GM10248 (cell line): ENCODE measurements at regions of chr3 and their contacts with region 1.

Region 1: GRCh38 chr3:52231502-52232293 is 6.3 kb upstream of the TLR9 start:
- DNase-seq: peak; percentile 81
- CTCF ChIP-seq: peak; percentile 96

Region 2: DNA sequence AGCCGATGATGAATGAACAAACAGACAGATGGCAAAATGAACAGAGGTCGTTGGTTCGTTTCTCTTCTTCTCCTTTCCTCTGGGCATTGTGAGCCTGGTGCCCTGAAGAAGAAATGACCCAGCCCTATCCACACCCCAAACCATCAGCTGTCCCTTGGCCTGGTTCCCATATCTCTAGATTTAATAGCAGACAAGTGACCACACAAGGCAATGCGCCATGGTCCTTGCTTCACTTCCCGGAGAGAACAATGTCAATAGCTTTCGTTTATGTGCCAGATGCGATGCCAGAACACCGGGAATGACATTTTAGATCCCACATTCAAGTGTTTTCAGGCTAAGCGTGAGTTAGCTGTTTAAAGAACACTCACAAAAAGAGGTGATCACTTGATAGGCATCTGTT is 95.2 kb before region 1 on chr3:
- CTCF ChIA-PET with region 1: no interaction called
- POLR2A ChIA-PET with region 1: no interaction called
- DNase-seq: no peak
- CTCF ChIP-seq: no peak

Region 3: DNA sequence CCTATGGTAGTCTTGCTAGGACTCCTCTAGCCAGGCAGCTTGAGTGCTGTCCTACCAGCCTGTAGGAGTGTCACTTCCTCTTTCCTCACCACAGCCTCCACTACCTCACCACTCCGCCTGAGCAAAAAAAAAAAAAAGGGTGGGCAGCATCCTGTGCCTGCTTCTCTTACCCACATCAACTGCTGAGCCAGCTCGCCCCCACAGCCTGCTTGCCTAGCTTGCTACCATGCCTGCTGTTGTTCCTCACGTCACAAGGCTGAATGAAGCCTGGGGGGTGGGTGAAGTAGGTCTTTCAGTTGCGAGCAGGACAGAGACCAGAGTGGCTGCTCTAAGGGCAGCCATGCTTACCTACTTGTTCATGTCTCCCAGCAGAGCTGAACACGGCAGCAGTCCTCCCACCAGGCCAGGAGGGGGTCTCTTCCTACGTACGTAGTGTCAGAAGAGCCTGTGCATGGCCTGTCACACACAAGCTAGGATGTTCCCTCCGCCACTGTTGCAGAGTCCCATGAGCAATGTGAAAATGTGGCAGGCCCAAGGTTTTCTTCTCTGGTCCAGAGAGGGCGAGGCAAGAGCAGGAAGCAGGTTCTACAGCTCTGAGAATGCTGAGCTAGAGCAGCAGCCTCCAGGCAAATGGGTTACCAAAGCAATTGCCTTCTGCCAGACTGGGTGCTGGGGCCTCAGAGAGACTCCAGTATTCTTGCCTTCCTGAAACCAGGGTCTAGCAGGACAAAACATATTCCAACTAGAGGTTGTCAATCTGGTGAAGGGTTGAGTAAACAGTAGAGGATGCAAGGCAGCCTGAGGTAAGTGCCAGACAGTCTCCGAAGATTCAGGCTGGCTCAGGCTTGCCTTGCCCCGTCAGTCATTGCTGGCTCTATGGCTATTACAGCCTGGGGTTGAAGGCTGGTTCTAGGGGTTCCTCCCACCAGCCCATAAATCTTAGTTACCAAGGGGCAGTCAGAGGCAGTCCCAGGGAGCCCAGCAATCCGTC is 21.9 kb after region 1 on chr3:
- CTCF ChIA-PET with region 1: interaction called, 31 read pairs
- POLR2A ChIA-PET with region 1: interaction called, 3 read pairs
- DNase-seq: peak; percentile 91
- CTCF ChIP-seq: no peak

Region 4: DNA sequence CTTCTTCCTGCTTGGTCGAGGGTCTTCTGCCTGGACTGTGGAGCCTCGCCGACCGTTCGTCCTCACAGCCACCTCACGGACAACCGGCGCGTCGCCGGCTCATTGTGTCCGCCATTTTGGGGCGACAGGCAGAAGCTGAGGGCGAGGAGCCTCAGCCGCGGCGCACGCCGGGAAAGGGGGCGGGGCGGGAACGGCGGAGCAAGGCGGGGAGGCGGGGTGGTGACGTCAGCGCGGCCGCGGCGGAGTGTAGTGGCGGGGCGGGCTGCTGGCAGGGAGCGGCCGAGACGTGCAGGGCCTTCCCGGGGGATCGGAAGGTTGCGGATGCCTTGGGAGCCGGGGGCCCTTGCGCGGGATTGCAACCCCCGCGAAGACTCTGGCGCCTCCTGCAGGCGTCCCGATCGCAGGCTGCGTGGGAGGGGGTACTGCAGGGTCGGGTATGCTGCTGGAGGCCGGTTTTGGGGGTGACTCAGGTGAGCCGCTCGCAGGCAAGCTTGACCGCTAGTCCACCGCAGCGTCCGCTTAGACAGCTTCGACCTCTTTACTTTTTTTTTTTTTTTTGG is 46.9 kb after region 1 on chr3 and contains the start of gene WDR82:
- CTCF ChIA-PET with region 1: interaction called, 44 read pairs
- POLR2A ChIA-PET with region 1: interaction called, 5 read pairs
- DNase-seq: peak; percentile 96
- CTCF ChIP-seq: no peak

Region 5: GRCh38 chr3:52291508-52292181 is 59.9 kb after region 1 on chr3:
- CTCF ChIA-PET with region 1: interaction called, 10 read pairs
- POLR2A ChIA-PET with region 1: no interaction called
- DNase-seq: peak; percentile 76
- CTCF ChIP-seq: peak; percentile 64

Region 6: DNA sequence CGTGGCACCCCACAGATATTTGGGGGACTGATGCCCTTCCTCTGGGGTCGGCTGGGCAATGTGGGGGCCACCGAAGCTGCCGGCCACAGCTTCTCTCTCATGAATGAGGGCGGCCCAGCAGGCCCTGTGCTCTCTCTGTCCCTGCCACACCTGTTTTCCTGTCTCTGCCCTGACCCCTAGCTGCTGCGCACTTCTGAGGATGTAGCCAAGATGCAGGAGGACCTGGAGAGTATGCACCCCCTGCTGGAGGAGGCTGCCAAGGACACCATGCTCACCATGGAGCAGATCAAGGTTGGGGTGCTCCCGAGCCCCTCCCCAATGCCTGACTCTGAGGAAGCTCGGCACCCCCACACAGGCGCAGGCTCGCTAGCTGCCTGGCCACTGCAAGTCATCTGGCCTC is 153.5 kb after region 1 on chr3:
- CTCF ChIA-PET with region 1: interaction called, 8 read pairs
- POLR2A ChIA-PET with region 1: interaction called, 12 read pairs
- DNase-seq: peak; percentile 75
- CTCF ChIP-seq: peak; percentile 50

Region 7: GRCh38 chr3:52444860-52445793 is 213.4 kb after region 1 on chr3 and contains the start of gene SEMA3G:
- CTCF ChIA-PET with region 1: interaction called, 19 read pairs
- POLR2A ChIA-PET with region 1: no interaction called
- DNase-seq: peak; percentile 85
- CTCF ChIP-seq: peak; percentile 39

Region 8: GRCh38 chr3:52892625-52893311 is 661.1 kb after region 1 on chr3:
- CTCF ChIA-PET with region 1: no interaction called
- POLR2A ChIA-PET with region 1: no interaction called
- DNase-seq: peak; percentile 62
- CTCF ChIP-seq: no peak